ENCODE measurements at regions of chr4 and their contacts with region 1.

Region 1: DNA sequence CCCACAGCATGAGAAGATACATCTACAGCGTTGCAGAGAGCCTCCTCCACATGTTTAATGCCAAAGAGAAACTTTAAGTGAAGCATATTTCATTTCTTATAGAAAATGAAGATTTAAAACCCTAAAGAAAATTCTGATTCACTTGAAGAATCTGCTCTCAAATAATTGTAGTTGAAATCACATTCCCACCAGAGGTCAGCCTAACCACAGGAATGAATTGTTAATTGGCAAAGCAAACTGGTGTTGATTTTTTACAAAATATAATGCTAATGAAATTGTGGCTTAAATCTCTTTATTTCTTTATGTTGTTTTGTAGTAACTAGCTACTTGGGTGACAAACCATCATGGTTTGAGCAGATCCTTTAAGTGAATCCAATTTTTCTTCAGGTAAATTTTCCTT is 31.1 kb upstream of the WDR17 start:
- DNase-seq: peak; percentile 56
- H3K4me3 Mint-ChIP-seq: no peak overlapping the region
- H3K27ac Mint-ChIP-seq: no peak overlapping the region
- H3K4me1 Mint-ChIP-seq: peaks cover 9% of the 10 kb centered on the region
- H3K27me3 Mint-ChIP-seq: no peaks in the 10 kb centered on the region
- CTCF ChIP-seq: peak; percentile 37

Region 2: GRCh38 chr4:175536852-175537453 is 497.5 kb before region 1 on chr4:
- CTCF ChIA-PET with region 1: no interaction called
- POLR2A ChIA-PET with region 1: no interaction called
- intact Hi-C with region 1: no loop called
- DNase-seq: peak; percentile 72
- H3K4me3 Mint-ChIP-seq: no peak overlapping the region
- H3K27ac Mint-ChIP-seq: no peak overlapping the region
- H3K4me1 Mint-ChIP-seq: peaks cover 6% of the 10 kb centered on the region
- H3K27me3 Mint-ChIP-seq: no peaks in the 10 kb centered on the region
- CTCF ChIP-seq: peak; percentile 63

Region 3: DNA sequence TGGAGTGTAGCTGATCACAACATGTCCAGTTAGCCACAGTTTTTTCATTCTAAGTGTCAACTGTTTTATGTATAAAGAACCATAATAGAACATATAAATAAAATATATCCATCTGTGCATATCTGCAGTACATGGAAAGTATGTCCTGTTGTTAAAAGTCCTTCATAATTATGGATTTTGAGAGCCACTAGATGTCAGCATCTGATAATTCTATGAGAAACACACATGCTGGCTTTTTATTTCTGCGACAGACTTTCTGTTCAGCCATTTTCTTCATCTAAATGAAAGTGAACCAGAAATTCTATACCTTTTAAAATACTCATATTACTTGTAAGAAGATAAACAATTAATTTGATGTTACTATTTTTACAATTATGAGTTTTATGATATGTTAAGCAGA is 473.9 kb before region 1 on chr4:
- CTCF ChIA-PET with region 1: no interaction called
- POLR2A ChIA-PET with region 1: interaction called, 3 read pairs
- intact Hi-C with region 1: loop called (anchors 5 kb)
- DNase-seq: peak; percentile 55
- H3K4me3 Mint-ChIP-seq: no peak overlapping the region
- H3K27ac Mint-ChIP-seq: no peak overlapping the region
- H3K4me1 Mint-ChIP-seq: peaks cover 5% of the 10 kb centered on the region
- H3K27me3 Mint-ChIP-seq: no peaks in the 10 kb centered on the region
- CTCF ChIP-seq: peak; percentile 56

Region 4: GRCh38 chr4:175947117-175947722 is 87.3 kb before region 1 on chr4:
- CTCF ChIA-PET with region 1: interaction called, 3 read pairs
- POLR2A ChIA-PET with region 1: no interaction called
- intact Hi-C with region 1: loop called (anchors 10 kb)
- DNase-seq: peak; percentile 42
- H3K4me3 Mint-ChIP-seq: no peak overlapping the region
- H3K27ac Mint-ChIP-seq: no peak overlapping the region
- H3K4me1 Mint-ChIP-seq: peaks cover 6% of the 10 kb centered on the region
- H3K27me3 Mint-ChIP-seq: no peaks in the 10 kb centered on the region
- CTCF ChIP-seq: peak; percentile 52

Region 5: DNA sequence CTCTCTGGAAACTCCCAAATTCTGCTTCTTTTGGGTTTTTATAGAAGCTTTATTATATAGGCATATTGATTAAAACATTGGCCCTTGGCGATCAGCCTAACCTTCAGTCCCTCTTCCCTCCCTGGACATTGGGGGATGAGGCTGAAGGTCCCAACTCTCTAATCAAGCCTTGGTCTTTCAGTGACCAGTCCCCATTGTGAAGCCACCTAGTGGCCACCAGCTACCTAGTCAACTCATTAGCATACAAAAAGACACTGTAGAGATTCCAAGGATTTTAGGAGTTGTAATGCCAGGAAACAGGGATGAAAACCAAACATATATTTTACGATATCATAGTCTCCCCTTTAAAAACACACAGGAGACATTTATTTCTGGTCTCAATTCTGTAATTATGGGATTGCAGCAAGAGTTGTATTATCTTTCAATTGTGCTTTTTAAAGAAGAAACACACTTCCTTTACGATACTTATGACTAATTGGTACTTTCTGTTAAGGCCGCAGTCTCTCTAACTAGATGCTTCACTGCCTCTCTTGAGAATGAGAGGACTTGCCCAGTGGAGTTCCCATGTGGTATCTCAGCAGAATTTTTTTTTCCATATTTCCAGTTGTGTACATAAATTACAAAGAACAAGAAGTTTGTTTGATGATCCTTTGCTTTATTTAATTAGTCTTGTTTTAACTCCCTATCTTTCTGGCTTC is 89.4 kb after region 1 on chr4:
- CTCF ChIA-PET with region 1: interaction called, 12 read pairs
- POLR2A ChIA-PET with region 1: no interaction called
- intact Hi-C with region 1: no loop called
- DNase-seq: peak; percentile 45
- H3K4me3 Mint-ChIP-seq: no peak overlapping the region
- H3K27ac Mint-ChIP-seq: peak overlapping the region; percentile 12
- H3K4me1 Mint-ChIP-seq: peaks cover 5% of the 10 kb centered on the region
- H3K27me3 Mint-ChIP-seq: no peaks in the 10 kb centered on the region
- CTCF ChIP-seq: peak; percentile 44

Region 6: DNA sequence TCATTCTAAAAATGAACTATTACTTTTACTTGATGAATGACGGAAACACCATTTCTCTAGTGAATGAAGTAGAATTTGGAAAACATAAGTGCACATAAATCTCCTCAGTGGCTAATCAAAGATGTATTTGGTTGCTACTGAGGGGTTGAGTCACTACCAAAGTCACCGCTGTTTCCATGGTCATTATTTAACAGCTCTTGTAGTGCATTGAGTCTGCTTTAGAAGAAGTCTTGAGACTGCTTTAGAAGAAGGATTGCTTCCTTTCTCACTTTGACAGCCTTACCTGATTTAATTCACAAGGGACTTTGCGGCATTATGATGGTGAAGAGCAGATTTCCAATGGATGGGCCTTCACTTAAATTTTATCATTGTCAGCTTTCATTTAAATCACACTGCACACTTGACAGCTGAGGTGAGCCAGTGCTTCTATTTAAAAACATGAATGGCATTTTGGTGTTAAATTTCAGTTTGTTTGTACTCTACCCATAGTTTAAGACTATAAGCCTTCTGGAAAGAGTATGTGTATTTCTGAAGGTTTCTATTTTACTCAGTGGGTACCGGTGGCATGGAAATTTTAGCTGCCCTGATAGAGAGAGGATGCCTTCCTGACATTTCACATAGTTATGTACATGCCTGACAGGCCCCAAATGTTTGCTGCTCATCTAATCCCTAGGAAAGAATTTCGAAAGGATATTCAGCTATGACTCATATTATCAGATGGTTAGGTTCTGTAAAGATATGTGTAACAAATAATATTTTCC is 225.0 kb after region 1 on chr4:
- CTCF ChIA-PET with region 1: no interaction called
- POLR2A ChIA-PET with region 1: no interaction called
- intact Hi-C with region 1: no loop called
- DNase-seq: peak; percentile 51
- H3K4me3 Mint-ChIP-seq: no peak overlapping the region
- H3K27ac Mint-ChIP-seq: peak overlapping the region; percentile 27
- H3K4me1 Mint-ChIP-seq: peaks cover 4% of the 10 kb centered on the region
- H3K27me3 Mint-ChIP-seq: no peaks in the 10 kb centered on the region
- CTCF ChIP-seq: no peak

Region 7: GRCh38 chr4:176270669-176271068 is 236.2 kb after region 1 on chr4:
- CTCF ChIA-PET with region 1: interaction called, 9 read pairs
- POLR2A ChIA-PET with region 1: no interaction called
- intact Hi-C with region 1: loop called (anchors 2 kb)
- DNase-seq: peak; percentile 93
- H3K4me3 Mint-ChIP-seq: no peak overlapping the region
- H3K27ac Mint-ChIP-seq: no peak overlapping the region
- H3K4me1 Mint-ChIP-seq: peaks cover 18% of the 10 kb centered on the region
- H3K27me3 Mint-ChIP-seq: no peaks in the 10 kb centered on the region
- CTCF ChIP-seq: no peak

Region 8: DNA sequence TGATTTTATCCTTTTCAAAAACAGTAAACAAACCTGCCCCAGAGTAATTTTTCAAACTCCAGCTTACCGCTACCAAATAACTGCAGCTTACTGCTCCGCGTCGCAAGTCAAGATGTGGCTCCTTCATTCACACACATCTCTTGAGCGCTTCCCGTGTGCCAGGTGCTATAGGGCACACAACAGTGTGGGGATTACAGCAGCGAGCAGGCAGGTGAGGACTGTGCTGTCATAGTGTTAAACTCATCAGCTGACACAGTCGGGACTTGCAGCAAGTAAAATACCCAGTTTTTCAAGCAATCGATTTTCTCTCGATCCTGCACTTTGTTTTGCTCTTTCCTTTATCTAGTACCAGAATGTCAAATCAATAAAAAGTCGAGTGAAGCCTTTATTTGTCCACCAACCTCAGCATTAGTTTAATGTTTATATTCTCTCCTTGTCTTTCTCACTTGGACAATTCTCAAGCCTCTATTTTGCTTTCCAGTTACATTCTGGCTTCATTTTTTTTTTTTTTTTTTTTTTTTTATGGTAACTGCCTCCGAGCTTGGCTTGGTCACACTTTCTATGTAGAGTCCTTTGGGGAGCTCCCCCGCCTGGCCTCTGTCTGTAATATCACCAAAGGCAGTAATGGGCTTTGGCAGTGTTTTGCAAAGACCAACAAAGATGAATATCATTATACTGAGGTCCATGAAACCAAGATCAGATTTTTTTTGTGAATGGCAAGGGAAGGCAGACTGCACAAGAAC is 242.8 kb after region 1 on chr4:
- CTCF ChIA-PET with region 1: interaction called, 9 read pairs
- POLR2A ChIA-PET with region 1: no interaction called
- intact Hi-C with region 1: loop called (anchors 1 kb)
- DNase-seq: peak; percentile 69
- H3K4me3 Mint-ChIP-seq: no peak overlapping the region
- H3K27ac Mint-ChIP-seq: peak overlapping the region; percentile 63
- H3K4me1 Mint-ChIP-seq: peaks cover 17% of the 10 kb centered on the region
- H3K27me3 Mint-ChIP-seq: no peaks in the 10 kb centered on the region
- CTCF ChIP-seq: peak; percentile 59